CD4-positive, alpha-beta T cell (primary cell): ENCODE measurements at regions of chrX and their contacts with region 1.

Region 1: GRCh38 chrX:153724252-153725040 is at the starts of genes ABCD1 and BCAP31:
- DNase-seq: peak; percentile 76 to 94 (median 86)
- ATAC-seq: peak; percentile 74
- H3K4me3 ChIP-seq: peak within 1 kb of the TSS; percentile 68
- H3K4me3 Mint-ChIP-seq: peak within 1 kb of the TSS; percentile 91
- H3K27ac ChIP-seq: peak within 1 kb of the TSS; percentile 68 to 72
- H3K27ac Mint-ChIP-seq: peak within 1 kb of the TSS; percentile 84
- H3K4me1 ChIP-seq: peaks cover 59% of the 10 kb centered on the region
- H3K4me1 Mint-ChIP-seq: peaks cover 26% of the 10 kb centered on the region
- H3K27me3 ChIP-seq: no peaks in the 10 kb centered on the region
- H3K27me3 Mint-ChIP-seq: no peaks in the 10 kb centered on the region
- CTCF ChIP-seq: no peak
- total RNA-seq, gene ABCD1: 8.6 to 9.2 TPM
- total RNA-seq, gene BCAP31: 42.1 to 43.1 TPM

Region 2: GRCh38 chrX:153794018-153794896 is 69.8 kb after region 1 on chrX and contains the starts of genes IDH3G and SSR4:
- CTCF ChIA-PET with region 1: no interaction called
- POLR2A ChIA-PET with region 1: interaction called, 3 read pairs
- intact Hi-C with region 1: loop called in 1 of 2 experiments (anchors 5 kb)
- DNase-seq: peak; percentile 84 to 97 (median 91)
- ATAC-seq: peak; percentile 91
- H3K4me3 ChIP-seq: peak within 1 kb of the TSS; percentile 89
- H3K4me3 Mint-ChIP-seq: peak within 1 kb of the TSS; percentile 97
- H3K27ac ChIP-seq: peak within 1 kb of the TSS; percentile 83 to 92
- H3K27ac Mint-ChIP-seq: peak within 1 kb of the TSS; percentile 89
- H3K4me1 ChIP-seq: peaks cover 44% of the 10 kb centered on the region
- H3K4me1 Mint-ChIP-seq: peaks cover 14% of the 10 kb centered on the region
- H3K27me3 ChIP-seq: no peaks in the 10 kb centered on the region
- H3K27me3 Mint-ChIP-seq: no peaks in the 10 kb centered on the region
- CTCF ChIP-seq: no peak
- total RNA-seq, gene IDH3G: 46.8 to 47.3 TPM
- total RNA-seq, gene SSR4: 171 to 173 TPM

Region 3: GRCh38 chrX:153900831-153901752 is 176.6 kb after region 1 on chrX:
- CTCF ChIA-PET with region 1: no interaction called
- POLR2A ChIA-PET with region 1: no interaction called
- intact Hi-C with region 1: no loop called
- DNase-seq: peak; percentile 23 to 87 (median 52)
- ATAC-seq: peak; percentile 86
- H3K4me3 ChIP-seq: no peak overlapping the region
- H3K4me3 Mint-ChIP-seq: peak overlapping the region; percentile 37
- H3K27ac ChIP-seq: no peak overlapping the region
- H3K27ac Mint-ChIP-seq: peak overlapping the region; percentile 39
- H3K4me1 ChIP-seq: peaks cover 58% of the 10 kb centered on the region
- H3K4me1 Mint-ChIP-seq: peaks cover 50% of the 10 kb centered on the region
- H3K27me3 ChIP-seq: no peaks in the 10 kb centered on the region
- H3K27me3 Mint-ChIP-seq: no peaks in the 10 kb centered on the region
- CTCF ChIP-seq: no peak